WTC11 (cell line): ENCODE measurements at regions of chr19 and their contacts with region 1.

Region 1: GRCh38 chr19:36489118-36489919 is at the start of gene ZNF566:
- DNase-seq: peak; percentile 98
- ATAC-seq: peak; percentile 95
- H3K4me3 Mint-ChIP-seq: peak within 1 kb of the TSS; percentile 94
- H3K27ac Mint-ChIP-seq: peak within 1 kb of the TSS; percentile 94
- H3K4me1 Mint-ChIP-seq: peaks cover 11% of the 10 kb centered on the region
- H3K27me3 Mint-ChIP-seq: no peaks in the 10 kb centered on the region
- CTCF ChIP-seq: no peak
- total RNA-seq, gene ZNF566: 10.5 to 13.7 TPM (median 12.9 TPM) in 3 replicates

Region 2: GRCh38 chr19:36214386-36215275 is 274.7 kb before region 1 on chr19 and contains the starts of genes ZNF146 and ZNF565:
- CTCF ChIA-PET with region 1: no interaction called
- POLR2A ChIA-PET with region 1: interaction called, 10 read pairs
- DNase-seq: peak; percentile 98
- ATAC-seq: peak; percentile 96
- H3K4me3 Mint-ChIP-seq: no peak within 1 kb of the TSS
- H3K27ac Mint-ChIP-seq: no peak within 1 kb of the TSS; the same call in none of the 2 replicates
- H3K4me1 Mint-ChIP-seq: peaks cover 19% of the 10 kb centered on the region
- H3K27me3 Mint-ChIP-seq: no peaks in the 10 kb centered on the region
- CTCF ChIP-seq: no peak
- total RNA-seq, gene ZNF146: 122 to 128 TPM (median 124 TPM) in 3 replicates
- total RNA-seq, gene ZNF565: 2.5 to 3.0 TPM (median 2.8 TPM) in 3 replicates

Region 3: DNA sequence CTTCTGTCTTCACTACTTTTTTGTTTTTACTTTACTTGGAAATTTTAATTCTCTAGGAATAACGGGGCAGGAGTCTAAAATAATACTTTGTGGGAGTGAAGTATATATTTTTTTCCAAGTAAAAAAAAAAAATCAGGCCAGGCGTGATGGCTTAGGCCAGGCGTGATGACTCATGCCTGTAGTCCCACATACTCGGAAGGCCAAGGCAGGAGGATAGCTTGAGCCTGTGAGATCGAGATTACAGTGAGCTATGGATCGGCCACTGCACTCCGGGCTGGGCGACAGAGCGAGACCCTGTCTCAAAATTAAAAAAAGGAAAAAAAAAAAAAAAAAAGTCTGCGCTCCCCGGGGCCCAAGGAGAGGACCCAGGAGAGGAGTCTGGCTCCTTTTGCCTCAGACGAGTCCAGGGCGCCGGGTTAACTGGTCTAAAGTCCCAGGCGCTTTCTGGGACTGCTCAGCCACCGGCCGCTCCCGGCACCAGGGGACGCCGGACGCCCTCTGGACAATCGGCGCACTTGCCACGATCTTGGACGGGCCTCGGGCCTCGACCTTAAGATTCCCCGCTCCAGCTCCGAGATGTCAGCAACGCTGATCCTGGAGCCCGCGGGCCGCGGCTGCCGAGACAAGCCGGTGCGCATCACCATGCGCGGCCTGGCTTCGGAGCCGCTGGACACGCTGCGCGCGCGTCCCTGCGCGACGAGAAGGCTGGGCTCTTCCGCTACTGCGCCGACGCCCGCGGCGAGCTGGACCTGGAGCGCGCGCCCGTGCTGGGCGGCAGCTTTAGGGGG is 68.2 kb before region 1 on chr19:
- CTCF ChIA-PET with region 1: interaction called, 7 read pairs
- POLR2A ChIA-PET with region 1: interaction called, 13 read pairs
- DNase-seq: peak; percentile 67
- ATAC-seq: peak; percentile 47
- H3K4me3 Mint-ChIP-seq: peak overlapping the region; percentile 75
- H3K27ac Mint-ChIP-seq: no peak overlapping the region
- H3K4me1 Mint-ChIP-seq: peaks cover 24% of the 10 kb centered on the region
- H3K27me3 Mint-ChIP-seq: peaks cover 73% of the 10 kb centered on the region
- CTCF ChIP-seq: no peak

Region 4: DNA sequence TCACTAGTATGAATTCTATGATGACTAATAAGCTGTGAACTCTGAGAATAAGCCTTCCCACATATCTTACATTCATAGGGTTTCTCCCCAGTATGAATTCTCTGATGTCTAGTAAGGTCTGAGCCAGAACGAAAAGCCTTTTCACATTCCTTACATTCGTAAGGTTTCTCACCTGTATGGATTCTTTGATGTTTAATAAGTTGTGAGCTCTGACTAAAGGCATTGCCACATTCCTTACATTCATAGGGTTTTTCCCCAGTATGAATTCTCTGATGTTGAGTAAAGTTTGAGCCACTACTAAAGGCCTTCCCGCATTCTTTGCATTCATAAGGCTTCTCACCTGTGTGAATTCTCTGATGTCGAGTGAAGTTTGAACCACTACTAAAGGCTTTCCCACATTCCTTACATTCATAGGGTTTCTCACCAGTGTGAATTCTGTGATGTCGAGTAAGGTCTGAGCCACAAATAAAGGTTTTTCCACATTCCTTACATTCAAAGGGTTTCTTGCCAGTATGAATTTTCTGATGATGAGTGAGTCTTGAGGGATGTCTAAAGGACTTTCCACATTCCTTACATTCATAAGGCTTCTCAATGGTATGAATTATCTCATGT is 40.2 kb before region 1 on chr19:
- CTCF ChIA-PET with region 1: no interaction called
- POLR2A ChIA-PET with region 1: no interaction called
- DNase-seq: no peak
- ATAC-seq: no peak
- H3K4me3 Mint-ChIP-seq: no peak overlapping the region
- H3K27ac Mint-ChIP-seq: no peak overlapping the region
- H3K4me1 Mint-ChIP-seq: no peaks in the 10 kb centered on the region
- H3K27me3 Mint-ChIP-seq: no peaks in the 10 kb centered on the region
- CTCF ChIP-seq: no peak

Region 5: GRCh38 chr19:36528194-36528920 is 39.0 kb after region 1 on chr19 and contains the start of gene ZNF260:
- CTCF ChIA-PET with region 1: no interaction called
- POLR2A ChIA-PET with region 1: interaction called, 16 read pairs
- DNase-seq: peak; percentile 98
- ATAC-seq: peak; percentile 96
- H3K4me3 Mint-ChIP-seq: peak within 1 kb of the TSS; percentile 99
- H3K27ac Mint-ChIP-seq: peak within 1 kb of the TSS; percentile 100
- H3K4me1 Mint-ChIP-seq: peaks cover 13% of the 10 kb centered on the region
- H3K27me3 Mint-ChIP-seq: no peaks in the 10 kb centered on the region; the same call in 1 of the 2 replicates
- CTCF ChIP-seq: no peak
- total RNA-seq, gene ZNF260: 24.1 to 29.0 TPM (median 25.3 TPM) in 3 replicates